ENCODE measurements at regions of chr15 and their contacts with region 1.

Region 1: GRCh38 chr15:35519541-35520149 is 26.3 kb downstream of the DPH6 start:
- DNase-seq: no peak
- ATAC-seq: peak; percentile 65 to 81
- H3K4me3 ChIP-seq: no peak overlapping the region
- H3K27ac ChIP-seq: no peak overlapping the region
- H3K4me1 ChIP-seq: no peaks in the 10 kb centered on the region
- H3K27me3 ChIP-seq: no peaks in the 10 kb centered on the region

Region 2: DNA sequence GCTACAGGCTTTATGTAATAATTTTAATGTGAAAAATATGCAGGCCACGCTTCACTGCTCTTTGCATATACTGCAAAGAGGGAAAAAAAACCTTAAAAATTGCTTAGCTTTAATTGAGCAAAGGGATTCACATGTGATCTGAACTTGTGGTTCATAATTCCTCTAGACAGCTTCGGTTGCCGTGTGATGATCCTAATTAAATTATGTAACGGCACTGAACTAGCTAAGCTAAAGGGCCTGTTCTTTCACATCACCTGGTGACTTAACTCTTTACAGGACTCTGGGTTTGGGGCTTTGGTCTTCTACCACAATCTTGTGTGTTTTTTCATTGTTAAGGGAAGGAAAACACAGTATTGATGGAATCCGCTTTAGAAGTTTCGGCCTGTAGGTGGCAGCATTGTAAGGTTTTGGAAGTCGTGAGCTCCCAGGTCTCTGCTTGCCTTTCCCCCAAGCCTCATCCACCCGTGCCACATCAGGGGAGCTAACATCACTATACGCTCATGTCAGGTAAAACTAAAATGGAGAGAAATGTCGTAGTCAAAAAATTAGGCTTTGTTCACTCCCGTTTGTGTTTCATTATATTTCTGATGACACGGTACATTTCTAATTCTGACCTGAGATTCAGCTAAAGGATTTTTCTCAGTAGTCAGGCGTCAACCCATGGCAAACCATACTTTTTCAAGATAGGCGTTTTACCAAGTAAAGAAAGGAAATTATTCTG is 231.9 kb after region 1 on chr15:
- intact Hi-C with region 1: loop called in 1 of 4 experiments (anchors 10 kb)
- DNase-seq: peak; percentile 50 to 86 (median 76)
- ATAC-seq: peak; percentile 84 to 91
- H3K4me3 ChIP-seq: no peak overlapping the region
- H3K27ac ChIP-seq: no peak overlapping the region
- H3K4me1 ChIP-seq: peaks cover 2% of the 10 kb centered on the region
- H3K27me3 ChIP-seq: no peaks in the 10 kb centered on the region

Region 3: DNA sequence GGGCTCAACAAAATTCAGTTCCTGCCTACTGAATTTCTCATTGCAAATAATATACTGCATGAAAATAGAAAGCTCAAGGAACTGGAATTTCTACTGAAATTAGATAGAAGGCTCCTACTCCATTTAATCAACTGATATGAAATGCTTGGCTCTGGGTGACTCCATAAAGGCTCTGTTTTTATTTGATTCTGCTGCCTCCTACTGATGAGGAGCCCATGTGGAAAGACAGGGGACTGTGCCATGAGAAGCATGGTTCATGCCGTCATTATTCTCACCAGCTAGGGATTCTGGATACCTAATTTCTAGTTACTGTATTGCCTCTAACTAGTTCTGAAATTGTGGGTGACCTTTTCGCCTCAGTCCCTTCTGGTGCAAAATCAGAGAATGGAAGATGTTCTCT is 392.6 kb after region 1 on chr15:
- intact Hi-C with region 1: loop called in 3 of 4 experiments (anchors 5 to 10 kb)
- DNase-seq: no peak
- ATAC-seq: peak; percentile 63 to 75
- H3K4me3 ChIP-seq: no peak overlapping the region
- H3K27ac ChIP-seq: no peak overlapping the region
- H3K4me1 ChIP-seq: peaks cover 2% of the 10 kb centered on the region
- H3K27me3 ChIP-seq: no peaks in the 10 kb centered on the region

Measured in right cardiac atrium (tissue), 5 donors.